Body of pancreas (tissue), 4 donors: ENCODE measurements at regions of chr15 and their contacts with region 1.

Region 1: GRCh38 chr15:66609876-66610275 is 44.1 kb upstream of the LCTL start:
- DNase-seq: no peak
- ATAC-seq: no peak
- H3K4me3 ChIP-seq: no peak overlapping the region
- H3K27ac ChIP-seq: no peak overlapping the region
- H3K4me1 ChIP-seq: peaks cover 9% of the 10 kb centered on the region
- H3K27me3 ChIP-seq: no peaks in the 10 kb centered on the region
- CTCF ChIP-seq: no peak
- POLR2A ChIP-seq: no peak

Region 2: DNA sequence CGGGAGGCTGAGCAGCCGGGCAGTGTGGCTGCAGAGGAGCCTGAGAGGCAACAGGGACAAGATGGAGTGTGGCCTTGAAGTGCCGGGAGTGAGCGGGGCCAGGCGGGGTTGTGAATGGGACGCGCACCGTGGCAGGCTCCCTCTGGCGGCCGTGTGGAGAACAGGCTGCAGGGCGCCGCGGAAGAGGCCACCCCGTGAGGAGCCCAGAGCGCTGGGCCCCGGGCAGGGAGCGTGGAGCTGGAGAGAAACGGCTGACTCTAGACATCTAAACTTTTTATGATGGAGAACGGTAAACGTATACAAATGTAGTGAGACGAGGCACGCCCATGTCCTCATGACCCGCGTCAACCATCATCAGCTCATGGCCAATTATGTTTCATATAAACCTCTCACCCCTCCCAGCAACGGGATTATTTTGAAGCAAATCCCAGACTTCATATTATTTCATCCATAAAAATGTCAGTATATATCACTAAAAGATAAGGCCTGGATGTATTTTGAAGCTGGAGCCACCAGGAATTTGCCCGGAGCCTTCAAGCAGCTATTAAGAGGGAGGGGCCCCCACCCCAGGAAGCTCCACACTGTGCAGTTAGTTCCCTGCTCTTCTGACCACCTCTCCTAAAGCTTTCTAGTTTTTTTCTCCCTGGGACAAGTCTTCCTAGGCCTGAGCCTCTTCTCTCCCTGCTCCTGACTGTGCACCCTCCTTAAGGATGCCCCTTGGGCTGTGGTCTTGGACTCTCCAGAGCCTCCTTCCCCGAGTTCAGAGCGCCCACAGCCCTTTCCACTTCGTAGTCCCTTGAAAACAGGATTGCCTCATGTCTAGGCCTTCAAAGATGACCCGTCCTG is 241.6 kb after region 1 on chr15:
- intact Hi-C with region 1: loop called (anchors 5 kb)
- DNase-seq: peak; percentile 83 to 87 (median 86)
- ATAC-seq: peak; percentile 96
- H3K4me3 ChIP-seq: no peak overlapping the region
- H3K27ac ChIP-seq: no peak overlapping the region
- H3K4me1 ChIP-seq: peaks cover 17% of the 10 kb centered on the region
- H3K27me3 ChIP-seq: no peaks in the 10 kb centered on the region
- CTCF ChIP-seq: peak; percentile 94 to 96 (median 95)
- POLR2A ChIP-seq: no peak